ENCODE measurements at regions of chr12 and their contacts with region 1.

Region 1: GRCh38 chr12:22856178-22856577 is 231.2 kb downstream of the ETNK1 start:
- DNase-seq: no peak
- ATAC-seq: no peak
- H3K4me3 Mint-ChIP-seq: no peak overlapping the region
- H3K27ac Mint-ChIP-seq: no peak overlapping the region
- H3K4me1 Mint-ChIP-seq: peaks cover 38% of the 10 kb centered on the region
- H3K27me3 Mint-ChIP-seq: no peaks in the 10 kb centered on the region
- CTCF ChIP-seq: peak; percentile 45; the same call in 1 of the 2 replicates

Region 2: DNA sequence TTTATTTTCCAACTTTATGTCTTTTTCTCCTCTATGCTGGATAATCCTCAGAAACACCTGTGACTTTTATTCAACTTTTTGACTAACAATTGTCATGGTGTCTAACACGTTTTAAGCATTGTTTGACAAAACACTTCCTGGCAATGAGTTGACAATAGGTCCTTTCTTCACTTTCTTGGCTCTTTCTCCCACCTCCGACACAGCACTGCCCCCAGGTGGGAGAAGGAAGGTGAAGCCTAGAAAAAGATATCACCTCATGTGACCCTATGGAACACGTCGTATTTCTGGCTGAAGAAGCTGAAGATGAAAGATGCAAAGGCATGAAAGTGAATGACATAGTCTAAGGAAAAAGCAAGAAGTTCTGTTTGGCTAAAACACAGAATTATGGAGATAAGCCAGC is 198.8 kb after region 1 on chr12:
- CTCF ChIA-PET with region 1: interaction called, 55 read pairs
- POLR2A ChIA-PET with region 1: no interaction called
- DNase-seq: peak; percentile 67
- ATAC-seq: peak; percentile 96
- H3K4me3 Mint-ChIP-seq: no peak overlapping the region
- H3K27ac Mint-ChIP-seq: no peak overlapping the region
- H3K4me1 Mint-ChIP-seq: no peaks in the 10 kb centered on the region
- H3K27me3 Mint-ChIP-seq: no peaks in the 10 kb centered on the region
- CTCF ChIP-seq: peak; percentile 47; the same call in 1 of the 2 replicates

Region 3: DNA sequence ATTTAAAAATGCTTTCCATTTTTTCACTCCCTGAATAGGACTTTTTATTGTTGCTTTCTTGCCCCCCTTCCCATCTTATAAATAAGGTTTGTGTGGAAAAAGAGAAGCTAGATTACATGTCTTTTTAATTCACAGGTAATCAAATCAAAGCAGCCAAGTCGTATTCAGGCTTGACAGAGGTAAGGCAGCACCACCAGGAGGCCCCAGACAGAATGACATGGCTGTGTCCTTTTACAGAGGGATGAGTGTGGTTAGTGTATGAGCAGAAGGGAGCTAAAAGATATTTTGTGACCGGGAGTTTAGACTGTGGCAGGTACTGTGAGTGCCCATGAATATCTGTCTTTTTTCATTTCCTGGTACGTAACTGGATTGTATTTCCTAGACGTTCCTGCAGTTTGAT is 364.9 kb after region 1 on chr12:
- CTCF ChIA-PET with region 1: interaction called, 17 read pairs
- POLR2A ChIA-PET with region 1: no interaction called
- DNase-seq: peak; percentile 33
- ATAC-seq: peak; percentile 97
- H3K4me3 Mint-ChIP-seq: no peak overlapping the region
- H3K27ac Mint-ChIP-seq: no peak overlapping the region
- H3K4me1 Mint-ChIP-seq: peaks cover 3% of the 10 kb centered on the region
- H3K27me3 Mint-ChIP-seq: no peaks in the 10 kb centered on the region
- CTCF ChIP-seq: peak; percentile 30; the same call in 1 of the 2 replicates

Measured in WTC11 (cell line).